ENCODE measurements at regions of chr11 and their contacts with region 1.

Region 1: DNA sequence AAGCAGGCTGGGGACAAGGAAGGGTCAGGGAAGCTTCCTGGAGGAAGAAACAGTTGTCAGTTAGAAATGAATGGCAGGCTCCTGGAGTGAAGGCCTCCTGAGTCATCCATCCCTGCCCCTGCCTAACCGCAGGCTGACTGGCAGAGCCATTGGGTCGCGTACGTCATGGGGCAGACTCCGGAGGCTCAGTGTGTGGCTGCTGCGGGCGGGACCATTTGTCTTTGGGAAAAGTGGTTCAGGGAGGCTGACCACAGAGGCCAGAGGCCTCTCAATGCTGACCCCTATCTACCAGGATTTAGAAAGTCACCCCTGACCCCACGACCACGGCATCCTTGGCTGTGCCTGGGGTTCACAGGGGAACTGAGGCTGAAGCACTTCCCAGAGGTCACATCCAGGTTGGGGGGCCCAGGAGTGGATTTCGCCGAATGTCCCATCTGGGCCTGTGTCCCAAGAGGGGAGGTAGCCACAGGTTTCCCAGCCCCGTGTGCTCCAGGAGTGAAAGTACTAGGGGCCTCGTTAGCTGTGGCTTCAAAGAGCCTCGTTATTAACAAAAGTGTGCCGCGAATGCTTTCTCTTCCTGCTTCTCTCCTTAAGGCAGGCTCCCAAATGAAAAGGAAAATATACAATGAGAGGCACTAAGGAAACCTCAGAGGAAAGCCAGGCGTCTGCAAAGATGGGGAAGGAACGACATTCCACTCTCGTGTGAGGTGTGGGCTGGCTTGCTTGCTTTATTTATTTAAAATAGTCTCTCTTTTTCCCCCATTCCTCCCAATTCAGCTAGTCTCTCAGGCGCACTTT is 58.9 kb downstream of the FLRT1 start:
- DNase-seq: peak; percentile 25
- H3K4me3 ChIP-seq: no peak overlapping the region
- H3K27ac ChIP-seq: peak overlapping the region; percentile 47
- H3K4me1 ChIP-seq: peaks cover 15% of the 10 kb centered on the region
- H3K27me3 ChIP-seq: no peaks in the 10 kb centered on the region
- CTCF ChIP-seq: no peak
- POLR2A ChIP-seq: no peak

Region 2: DNA sequence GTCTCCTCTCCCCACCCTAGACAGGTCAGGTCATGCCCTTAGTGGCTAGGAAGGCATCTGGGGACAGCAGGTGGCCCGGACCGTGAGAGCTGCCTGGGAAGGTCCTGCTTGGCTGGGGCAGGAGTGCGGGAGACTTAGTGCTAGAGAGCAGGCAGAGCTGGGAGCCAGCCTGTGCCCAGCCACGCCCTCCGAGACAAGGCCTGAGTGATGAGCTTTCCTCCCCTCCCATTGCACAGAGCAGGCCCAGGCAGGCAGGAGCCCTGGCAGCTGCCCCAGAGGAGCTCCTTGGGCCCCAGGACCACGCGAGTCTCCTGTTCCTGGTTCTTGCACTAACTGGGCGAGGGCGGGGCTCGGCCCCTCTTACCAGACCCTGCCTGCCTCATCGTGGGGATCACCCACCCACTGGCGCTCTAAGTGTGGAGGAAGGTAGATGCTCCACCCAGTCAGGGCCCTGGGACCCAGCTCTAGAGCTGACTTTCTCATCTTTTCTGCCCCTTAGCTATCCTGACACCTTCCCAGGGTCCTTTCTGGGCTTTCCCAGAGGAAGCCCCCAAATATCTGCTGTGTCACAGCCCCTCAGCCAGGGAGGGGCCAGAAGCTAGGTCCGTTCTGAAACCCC is 26.4 kb after region 1 on chr11:
- CTCF ChIA-PET with region 1: no interaction called
- POLR2A ChIA-PET with region 1: no interaction called
- dilution Hi-C with region 1: no loop called
- intact Hi-C with region 1: loop called (anchors 1 kb)
- DNase-seq: no peak
- H3K4me3 ChIP-seq: no peak overlapping the region
- H3K27ac ChIP-seq: no peak overlapping the region
- H3K4me1 ChIP-seq: no peaks in the 10 kb centered on the region
- H3K27me3 ChIP-seq: no peaks in the 10 kb centered on the region
- CTCF ChIP-seq: no peak
- POLR2A ChIP-seq: no peak

Region 3: DNA sequence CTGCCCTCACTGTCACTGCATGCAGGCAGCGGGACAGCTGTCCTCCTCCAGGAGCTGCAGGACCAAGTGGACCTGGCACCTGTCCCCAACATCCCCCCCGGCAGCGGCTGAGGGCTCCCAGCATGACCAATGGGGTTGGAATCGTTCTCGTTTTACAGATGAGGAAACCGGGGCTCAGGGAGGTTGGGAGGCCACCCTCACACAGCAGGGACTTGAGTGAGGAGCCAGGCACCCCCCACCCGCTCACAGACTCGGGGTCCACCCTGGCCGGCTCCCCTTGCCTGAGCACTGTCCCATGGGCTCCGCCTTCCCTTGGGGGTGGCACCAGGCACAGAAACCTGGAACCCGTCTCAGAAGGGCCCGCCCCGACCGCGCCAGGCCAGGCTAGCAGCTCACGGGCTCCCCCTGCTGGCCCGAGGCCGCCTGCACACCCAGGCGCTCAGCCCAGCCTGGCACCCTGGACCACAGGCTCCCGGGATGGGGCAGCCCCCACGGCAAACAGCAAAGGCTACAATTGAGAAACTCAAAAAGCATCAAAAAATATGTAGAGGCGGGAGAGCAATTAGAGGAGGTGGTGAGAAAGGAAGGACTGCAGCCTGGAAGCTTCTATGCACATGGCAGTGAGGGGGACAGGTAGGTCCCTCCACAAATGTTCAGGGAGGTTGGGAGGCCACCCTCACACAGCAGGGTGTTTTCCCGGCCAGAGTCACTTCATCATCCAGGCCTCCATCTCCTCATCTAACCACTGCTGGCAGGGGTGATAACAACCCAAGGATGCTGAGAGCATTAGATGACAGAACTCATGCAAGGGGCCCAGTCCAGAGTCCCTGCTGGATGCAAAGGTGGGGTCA is 58.4 kb after region 1 on chr11:
- CTCF ChIA-PET with region 1: interaction called, 3 read pairs
- POLR2A ChIA-PET with region 1: no interaction called
- dilution Hi-C with region 1: no loop called
- intact Hi-C with region 1: loop called (anchors 5 kb)
- DNase-seq: peak; percentile 42
- H3K4me3 ChIP-seq: no peak overlapping the region
- H3K27ac ChIP-seq: no peak overlapping the region
- H3K4me1 ChIP-seq: no peaks in the 10 kb centered on the region
- H3K27me3 ChIP-seq: no peaks in the 10 kb centered on the region
- CTCF ChIP-seq: peak; percentile 99 to 100
- POLR2A ChIP-seq: no peak